Activated CD4-positive, alpha-beta memory T cell treated with anti-CD3 and anti-CD28 coated beads for 36 hours (primary cell): ENCODE measurements at regions of chr12 and their contacts with region 1.

Region 1: GRCh38 chr12:68451261-68452077 is 119.3 kb upstream of the MDM1 start:
- DNase-seq: peak; percentile 70
- H3K4me3 Mint-ChIP-seq: peak overlapping the region; percentile 33
- H3K27ac Mint-ChIP-seq: peak overlapping the region; percentile 95
- H3K4me1 Mint-ChIP-seq: peaks cover 85% of the 10 kb centered on the region
- H3K27me3 Mint-ChIP-seq: no peaks in the 10 kb centered on the region

Region 2: DNA sequence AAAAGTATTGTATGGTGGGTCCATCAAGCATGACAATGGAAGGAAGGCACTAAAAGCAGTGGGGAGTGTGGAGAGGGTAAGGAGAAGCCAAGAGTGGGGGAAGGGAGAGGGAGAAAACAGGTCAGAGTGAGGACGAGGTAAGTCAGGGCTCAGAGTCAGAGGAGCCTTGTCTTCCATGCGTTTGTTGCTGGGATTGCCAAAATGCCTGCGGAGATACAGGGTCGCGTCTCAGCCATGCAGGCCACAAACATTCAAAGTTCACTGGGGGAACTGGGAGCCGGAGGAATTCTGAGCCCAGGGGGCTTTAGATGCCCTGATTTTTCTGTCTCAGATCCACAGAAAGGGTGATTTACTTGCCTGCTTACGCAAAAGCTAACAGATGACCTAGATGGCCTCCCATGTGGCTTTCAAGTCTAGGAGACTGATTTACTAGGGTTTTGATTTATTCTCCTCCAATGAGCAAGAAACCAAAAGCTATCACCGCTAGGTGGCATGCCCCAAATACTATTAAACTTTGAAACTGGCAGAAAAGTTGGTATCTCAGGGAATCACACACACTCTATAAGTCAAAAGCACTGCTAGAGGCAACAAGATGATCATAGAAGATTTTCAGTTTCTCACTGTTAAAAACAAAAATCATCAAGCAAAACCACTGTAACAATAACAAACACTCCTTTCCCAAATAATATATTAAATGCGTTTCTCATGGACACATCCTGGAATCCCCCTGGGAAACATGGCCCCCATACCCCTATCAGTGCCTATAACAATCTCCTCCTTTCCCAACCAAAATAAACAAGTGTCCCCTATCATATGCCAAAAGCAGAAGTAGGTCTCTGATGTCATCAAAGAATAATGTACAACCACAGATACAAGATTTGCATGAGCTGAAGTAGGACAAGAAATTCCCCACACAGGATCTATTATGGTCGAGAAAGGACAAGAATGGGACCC is 92.7 kb before region 1 on chr12:
- CTCF ChIA-PET with region 1: interaction called, 13 read pairs
- POLR2A ChIA-PET with region 1: interaction called, 5 read pairs
- intact Hi-C with region 1: no loop called
- DNase-seq: peak; percentile 71
- H3K4me3 Mint-ChIP-seq: no peak overlapping the region
- H3K27ac Mint-ChIP-seq: no peak overlapping the region
- H3K4me1 Mint-ChIP-seq: peaks cover 21% of the 10 kb centered on the region
- H3K27me3 Mint-ChIP-seq: no peaks in the 10 kb centered on the region

Region 3: DNA sequence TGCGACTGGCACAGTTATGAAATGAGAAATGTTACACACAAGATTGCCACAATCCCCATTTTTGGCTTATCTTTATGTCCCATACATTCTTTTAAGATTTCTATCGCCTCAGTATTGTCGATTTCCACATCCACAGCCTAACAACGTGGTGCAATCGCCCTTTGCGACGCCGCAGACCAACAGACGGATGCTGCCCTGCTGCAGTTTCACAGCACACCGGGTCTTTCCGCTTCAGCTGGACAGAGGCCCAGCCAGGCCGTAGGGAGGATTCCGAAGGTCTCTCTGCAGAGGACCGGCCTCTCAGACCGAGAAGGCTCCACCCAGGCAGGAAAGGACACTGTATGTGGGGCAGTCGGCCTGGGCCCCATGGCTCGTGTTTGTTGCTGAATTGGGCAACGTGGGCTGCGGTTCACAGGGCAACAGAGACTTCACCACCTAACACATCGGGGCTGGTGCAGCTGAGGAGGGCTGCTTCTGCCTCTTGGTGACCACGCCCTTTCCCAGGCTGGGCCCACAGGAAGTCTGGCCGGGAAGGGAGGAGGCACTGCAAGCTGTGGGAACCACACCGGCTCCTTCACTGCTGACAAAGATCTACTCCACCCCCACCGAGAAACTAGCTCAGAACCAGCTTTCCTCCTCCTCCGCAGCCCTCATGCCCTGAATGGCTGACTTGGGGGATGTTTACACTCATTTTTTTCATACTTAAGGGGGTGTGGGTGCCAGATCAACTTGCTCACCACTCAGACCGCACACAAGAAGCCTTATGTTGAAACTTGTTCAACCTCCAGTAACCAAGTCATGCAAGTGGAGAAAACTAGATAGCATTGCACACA is 86.4 kb before region 1 on chr12:
- CTCF ChIA-PET with region 1: interaction called, 3 read pairs
- POLR2A ChIA-PET with region 1: interaction called, 5 read pairs
- intact Hi-C with region 1: loop called (anchors 1 kb)
- DNase-seq: peak; percentile 94
- H3K4me3 Mint-ChIP-seq: peak overlapping the region; percentile 79
- H3K27ac Mint-ChIP-seq: peak overlapping the region; percentile 92
- H3K4me1 Mint-ChIP-seq: peaks cover 53% of the 10 kb centered on the region
- H3K27me3 Mint-ChIP-seq: no peaks in the 10 kb centered on the region

Region 4: GRCh38 chr12:68374307-68374982 is 77.0 kb before region 1 on chr12:
- CTCF ChIA-PET with region 1: interaction called, 5 read pairs
- POLR2A ChIA-PET with region 1: interaction called, 11 read pairs
- intact Hi-C with region 1: loop called (anchors 1 kb)
- DNase-seq: peak; percentile 84
- H3K4me3 Mint-ChIP-seq: peak overlapping the region; percentile 27
- H3K27ac Mint-ChIP-seq: peak overlapping the region; percentile 98
- H3K4me1 Mint-ChIP-seq: peaks cover 45% of the 10 kb centered on the region
- H3K27me3 Mint-ChIP-seq: no peaks in the 10 kb centered on the region

Region 5: DNA sequence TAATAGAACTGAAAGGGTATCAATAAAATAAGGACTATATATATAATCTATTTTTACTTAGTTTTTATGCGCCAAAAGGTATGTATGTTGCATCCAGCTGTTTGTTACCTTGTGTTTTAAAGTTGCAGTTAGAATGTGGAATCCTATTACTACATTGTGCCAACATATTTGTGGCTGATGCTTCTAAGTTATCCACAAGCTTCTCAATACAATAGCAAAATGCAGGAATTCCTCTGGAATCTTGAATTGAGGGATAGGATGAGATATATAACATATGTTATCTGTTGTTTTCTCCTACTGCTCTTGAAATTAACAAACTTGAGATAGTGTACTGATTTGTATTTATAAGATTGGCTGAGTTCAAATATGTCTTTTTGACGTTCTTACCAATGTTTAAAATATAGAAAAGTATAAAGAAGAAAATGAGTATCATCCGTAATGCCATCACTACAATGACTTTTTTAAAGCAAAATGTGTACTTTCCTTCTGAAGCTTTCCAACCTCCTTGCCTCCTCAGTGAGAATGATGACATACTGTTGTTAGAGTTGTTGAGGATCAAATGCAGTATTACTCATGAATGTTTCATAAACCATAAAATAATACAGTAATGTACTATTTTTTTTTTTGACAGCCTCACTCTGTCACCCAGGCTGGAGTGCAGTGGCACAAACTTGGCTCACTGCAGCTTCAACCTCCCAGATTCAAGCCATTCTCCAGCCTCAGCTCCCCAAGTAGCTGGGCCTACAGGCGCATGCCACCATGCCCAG is 165.9 kb after region 1 on chr12:
- CTCF ChIA-PET with region 1: interaction called, 4 read pairs
- POLR2A ChIA-PET with region 1: interaction called, 8 read pairs
- intact Hi-C with region 1: loop called (anchors 1 kb)
- DNase-seq: no peak
- H3K4me3 Mint-ChIP-seq: no peak overlapping the region
- H3K27ac Mint-ChIP-seq: peak overlapping the region; percentile 67
- H3K4me1 Mint-ChIP-seq: peaks cover 82% of the 10 kb centered on the region
- H3K27me3 Mint-ChIP-seq: no peaks in the 10 kb centered on the region